Dendritic cell treated with granulocyte-macrophage colony-stimulating factor and Interleukin-4, amounts not matched to agents 40 ng/mL and 50 ng/mL, for 4 days (primary cell): ENCODE measurements at regions of chr19 and their contacts with region 1.

Region 1: DNA sequence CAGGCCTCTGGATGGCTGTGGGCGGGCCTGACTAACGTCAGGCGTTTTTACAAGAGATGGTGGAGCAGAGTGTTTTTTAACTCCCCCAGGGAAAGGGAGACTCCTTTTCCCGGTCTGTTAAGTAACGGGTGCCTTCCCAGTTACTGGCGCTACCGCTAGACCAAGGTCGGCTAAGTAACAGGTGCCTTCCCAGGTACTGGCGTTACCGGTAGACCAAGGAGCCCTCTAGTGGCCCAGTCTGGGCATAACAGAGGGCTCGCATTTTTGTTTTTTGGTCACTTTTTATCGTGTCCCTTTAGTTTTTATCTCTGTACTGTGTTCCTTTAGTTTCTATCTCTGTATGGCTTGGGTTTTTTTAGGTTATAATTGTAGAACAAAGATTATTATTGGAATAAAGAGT is 10.0 kb downstream of the ZNF383 start:
- H3K4me3 Mint-ChIP-seq: no peak overlapping the region
- H3K27ac Mint-ChIP-seq: no peak overlapping the region
- H3K4me1 Mint-ChIP-seq: no peaks in the 10 kb centered on the region
- H3K27me3 Mint-ChIP-seq: no peaks in the 10 kb centered on the region

Region 2: GRCh38 chr19:36796076-36796992 is 431.7 kb before region 1 on chr19:
- intact Hi-C with region 1: no loop called
- H3K4me3 Mint-ChIP-seq: peak overlapping the region; percentile 88
- H3K27ac Mint-ChIP-seq: peak overlapping the region; percentile 95
- H3K4me1 Mint-ChIP-seq: no peaks in the 10 kb centered on the region
- H3K27me3 Mint-ChIP-seq: peaks cover 9% of the 10 kb centered on the region

Region 3: DNA sequence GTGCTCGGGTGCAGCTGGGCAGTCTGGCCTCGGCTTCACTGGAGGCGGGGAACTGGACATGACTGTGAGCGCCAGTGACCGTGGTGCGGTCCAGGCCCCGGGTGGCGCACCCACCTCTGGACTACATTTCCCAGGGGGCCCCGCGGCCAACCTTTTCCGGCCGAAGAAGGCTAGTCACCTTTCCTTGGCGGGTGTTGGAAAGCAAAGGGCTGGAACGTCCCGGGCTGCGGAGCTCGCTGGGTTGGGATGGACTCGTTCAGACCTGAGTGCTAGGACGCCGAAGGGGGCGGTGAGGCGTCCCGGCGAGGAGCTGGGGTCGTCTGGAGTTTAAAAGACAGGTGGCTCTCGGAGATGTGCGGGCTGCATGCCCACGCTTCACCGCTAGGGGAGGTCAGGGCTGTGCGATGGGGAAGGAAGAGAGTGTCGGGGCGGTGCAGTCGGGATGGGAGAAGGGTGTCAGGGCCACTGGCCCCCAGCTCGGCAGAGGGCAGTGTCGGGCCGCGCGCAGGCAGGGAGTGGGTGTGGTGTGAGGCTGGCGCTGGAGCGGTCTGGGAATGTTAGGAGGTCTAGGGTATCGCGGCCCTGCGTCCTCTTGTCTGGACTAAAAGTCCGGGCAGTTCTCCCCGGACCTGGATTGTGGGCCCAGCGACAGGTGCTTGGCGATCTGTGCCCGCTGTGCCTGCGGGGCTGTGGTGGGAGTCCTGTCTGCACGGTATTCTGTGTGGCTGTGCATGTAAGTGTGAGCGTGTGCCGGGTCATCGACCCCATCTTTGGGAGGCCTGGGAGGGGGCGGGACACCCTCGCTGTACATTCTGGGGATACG is 254.8 kb before region 1 on chr19:
- intact Hi-C with region 1: loop called (anchors 10 kb)
- H3K4me3 Mint-ChIP-seq: peak overlapping the region; percentile 85
- H3K27ac Mint-ChIP-seq: peak overlapping the region; percentile 66
- H3K4me1 Mint-ChIP-seq: peaks cover 15% of the 10 kb centered on the region
- H3K27me3 Mint-ChIP-seq: peaks cover 4% of the 10 kb centered on the region